ENCODE measurements at regions of chr14 and their contacts with region 1.

Region 1: DNA sequence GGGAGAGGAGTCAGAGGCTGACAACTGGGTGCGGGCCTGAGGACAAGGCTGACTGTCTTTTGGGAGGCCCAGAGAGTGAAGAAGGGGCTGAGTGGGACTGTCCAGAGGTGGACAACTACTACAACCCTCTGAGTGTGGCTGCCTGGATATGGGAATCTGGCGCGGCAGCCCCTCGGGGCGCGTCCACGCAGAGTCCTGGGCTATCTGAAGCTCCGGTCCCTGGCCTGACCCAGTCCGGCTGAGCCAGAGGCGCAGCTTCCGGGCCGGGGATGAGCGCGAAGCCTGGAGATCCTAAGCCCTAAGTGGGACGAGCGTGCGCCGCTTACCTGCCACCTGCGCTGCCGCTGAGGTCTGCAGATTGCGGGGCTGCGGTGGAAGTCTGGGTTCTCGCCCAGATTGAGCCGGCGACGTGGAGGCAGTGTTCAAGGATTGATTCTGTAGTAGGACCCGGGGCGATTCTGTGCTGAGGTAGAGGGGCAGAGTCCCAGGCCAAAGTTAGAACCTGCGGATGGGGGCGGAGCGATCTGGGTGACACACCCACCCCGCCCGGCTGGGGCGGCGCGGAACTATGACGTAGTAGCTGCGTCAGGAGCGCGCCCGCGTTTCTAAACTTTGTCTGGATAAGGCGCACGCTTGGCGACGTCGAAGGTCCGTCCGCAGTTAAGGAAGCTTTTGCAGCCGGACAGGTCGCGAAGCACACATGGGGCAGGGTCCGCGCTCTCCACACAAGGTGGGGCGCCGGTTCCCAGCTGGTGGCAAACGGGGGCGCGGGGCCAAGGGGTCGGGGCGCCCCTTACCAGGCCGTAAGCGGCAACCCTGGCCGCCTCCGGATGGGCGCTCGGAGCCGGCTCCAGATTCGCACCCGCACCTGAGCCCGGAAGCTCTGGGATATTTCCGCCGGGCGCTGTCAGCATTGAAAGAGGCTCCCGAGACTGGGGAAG is at the starts of genes DHRS1 and NOP9:
- DNase-seq: peak; percentile 70 to 96 (median 89)
- ATAC-seq: peak; percentile 86 to 92 (median 90)
- H3K4me3 ChIP-seq: peak within 1 kb of the TSS; percentile 70 to 82
- H3K4me3 Mint-ChIP-seq: peak within 1 kb of the TSS; percentile 92 to 95 (median 93)
- H3K27ac ChIP-seq: peak within 1 kb of the TSS; percentile 84
- H3K27ac Mint-ChIP-seq: peak within 1 kb of the TSS; percentile 95 to 97
- H3K4me1 ChIP-seq: peaks cover 23 to 32% of the 10 kb centered on the region in 2 experiments
- H3K4me1 Mint-ChIP-seq: peaks cover 45 to 60% (median 49%) of the 10 kb centered on the region in 3 donors
- H3K27me3 ChIP-seq: no peaks in the 10 kb centered on the region
- H3K27me3 Mint-ChIP-seq: no peaks in the 10 kb centered on the region
- total RNA-seq, gene DHRS1: 34.2 to 47.6 (median 39.1) TPM
- total RNA-seq, gene NOP9: 29.7 to 33.2 (median 30.8) TPM

Region 2: GRCh38 chr14:24271134-24271833 is 28.2 kb before region 1 on chr14 and contains the start of gene RABGGTA:
- CTCF ChIA-PET with region 1: interaction called, 3 to 11 read pairs
- POLR2A ChIA-PET with region 1: interaction called in 1 of 2 experiments, 3 read pairs
- DNase-seq: peak; percentile 85 to 98 (median 96)
- ATAC-seq: peak; percentile 87 to 97 (median 95)
- H3K4me3 ChIP-seq: peak within 1 kb of the TSS; percentile 82 to 94
- H3K4me3 Mint-ChIP-seq: peak within 1 kb of the TSS; percentile 84 to 90 (median 90)
- H3K27ac ChIP-seq: peak within 1 kb of the TSS; percentile 96
- H3K27ac Mint-ChIP-seq: peak within 1 kb of the TSS; percentile 95 to 97
- H3K4me1 ChIP-seq: peaks cover 15 to 29% of the 10 kb centered on the region in 2 experiments
- H3K4me1 Mint-ChIP-seq: peaks cover 34 to 51% (median 37%) of the 10 kb centered on the region in 3 donors
- H3K27me3 ChIP-seq: no peaks in the 10 kb centered on the region
- H3K27me3 Mint-ChIP-seq: no peaks in the 10 kb centered on the region
- total RNA-seq, gene RABGGTA: 49.3 to 66.5 (median 62.4) TPM

Region 3: DNA sequence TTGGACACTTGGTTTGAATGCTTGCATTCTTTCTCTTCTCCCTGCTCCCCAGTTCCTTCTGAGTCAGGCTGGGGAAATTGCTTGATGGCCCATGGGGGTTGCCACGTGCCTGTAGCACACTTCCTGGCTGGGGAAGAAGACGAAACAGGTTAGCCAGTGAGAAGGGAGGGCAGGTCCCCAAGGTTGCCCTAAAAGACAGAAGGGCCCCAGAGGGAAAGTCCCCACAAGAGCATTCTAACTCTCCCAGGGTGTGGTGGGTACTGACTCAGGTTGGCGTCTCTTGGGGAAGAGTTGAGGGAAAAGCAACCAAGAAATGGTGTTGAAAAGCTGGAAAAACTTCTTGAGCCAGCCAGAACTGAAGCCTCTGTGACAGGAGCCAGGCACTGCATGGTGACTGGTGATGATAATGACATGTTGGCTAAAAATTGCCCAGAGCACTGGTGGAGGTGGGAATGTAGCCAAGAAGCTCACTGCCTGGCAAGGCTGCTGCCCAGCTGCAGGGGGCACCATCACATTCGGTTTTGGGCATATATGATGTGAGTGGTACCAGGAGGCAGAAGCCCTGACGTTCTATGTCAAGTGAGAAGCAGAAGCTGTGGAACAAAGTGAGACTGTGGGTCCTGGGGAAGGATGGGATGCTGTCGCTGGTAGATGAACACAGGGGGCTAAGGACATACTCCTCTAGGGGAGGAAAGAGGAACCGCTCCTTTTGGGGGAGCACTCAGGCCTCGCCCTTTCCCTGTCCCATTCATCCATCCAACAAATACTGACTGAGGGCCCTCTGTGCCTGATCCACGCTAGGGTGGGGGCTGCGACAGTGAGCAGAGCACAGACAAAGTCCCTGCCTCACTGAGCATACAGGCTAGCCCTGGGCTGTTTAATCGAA is 20.0 kb before region 1 on chr14:
- CTCF ChIA-PET with region 1: interaction called in 1 of 2 experiments, 14 read pairs
- POLR2A ChIA-PET with region 1: no interaction called
- DNase-seq: peak in 33 of 35 experiments; percentile 11 to 76 (median 42)
- ATAC-seq: peak; percentile 68 to 94 (median 80)
- H3K4me3 ChIP-seq: no peak overlapping the region
- H3K4me3 Mint-ChIP-seq: peak overlapping the region in 1 of 3 donors; percentile 25
- H3K27ac ChIP-seq: peak overlapping the region; percentile 64
- H3K27ac Mint-ChIP-seq: peak overlapping the region; percentile 48 to 79
- H3K4me1 ChIP-seq: peaks cover 11 to 18% of the 10 kb centered on the region in 2 experiments
- H3K4me1 Mint-ChIP-seq: peaks cover 17 to 47% (median 33%) of the 10 kb centered on the region in 3 donors
- H3K27me3 ChIP-seq: no peaks in the 10 kb centered on the region
- H3K27me3 Mint-ChIP-seq: no peaks in the 10 kb centered on the region

Region 4: DNA sequence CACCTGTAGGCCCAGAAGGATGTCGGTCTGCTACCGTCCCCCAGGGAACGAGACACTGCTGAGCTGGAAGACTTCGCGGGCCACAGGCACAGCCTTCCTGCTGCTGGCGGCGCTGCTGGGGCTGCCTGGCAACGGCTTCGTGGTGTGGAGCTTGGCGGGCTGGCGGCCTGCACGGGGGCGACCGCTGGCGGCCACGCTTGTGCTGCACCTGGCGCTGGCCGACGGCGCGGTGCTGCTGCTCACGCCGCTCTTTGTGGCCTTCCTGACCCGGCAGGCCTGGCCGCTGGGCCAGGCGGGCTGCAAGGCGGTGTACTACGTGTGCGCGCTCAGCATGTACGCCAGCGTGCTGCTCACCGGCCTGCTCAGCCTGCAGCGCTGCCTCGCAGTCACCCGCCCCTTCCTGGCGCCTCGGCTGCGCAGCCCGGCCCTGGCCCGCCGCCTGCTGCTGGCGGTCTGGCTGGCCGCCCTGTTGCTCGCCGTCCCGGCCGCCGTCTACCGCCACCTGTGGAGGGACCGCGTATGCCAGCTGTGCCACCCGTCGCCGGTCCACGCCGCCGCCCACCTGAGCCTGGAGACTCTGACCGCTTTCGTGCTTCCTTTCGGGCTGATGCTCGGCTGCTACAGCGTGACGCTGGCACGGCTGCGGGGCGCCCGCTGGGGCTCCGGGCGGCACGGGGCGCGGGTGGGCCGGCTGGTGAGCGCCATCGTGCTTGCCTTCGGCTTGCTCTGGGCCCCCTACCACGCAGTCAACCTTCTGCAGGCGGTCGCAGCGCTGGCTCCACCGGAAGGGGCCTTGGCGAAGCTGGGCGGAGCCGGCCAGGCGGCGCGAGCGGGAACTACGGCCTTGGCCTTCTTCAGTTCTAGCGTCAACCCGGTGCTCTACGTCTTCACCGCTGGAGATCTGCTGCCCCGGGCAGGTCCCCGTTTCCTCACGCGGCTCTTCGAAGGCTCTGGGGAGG is 11.4 kb after region 1 on chr14 and contains the start of gene LTB4R:
- CTCF ChIA-PET with region 1: interaction called, 5 to 18 read pairs
- POLR2A ChIA-PET with region 1: interaction called in 1 of 2 experiments, 4 read pairs
- DNase-seq: peak; percentile 31 to 84 (median 59)
- ATAC-seq: peak; percentile 86 to 91 (median 88)
- H3K4me3 ChIP-seq: peak within 1 kb of the TSS; percentile 61 to 64
- H3K4me3 Mint-ChIP-seq: peak within 1 kb of the TSS; percentile 74 to 83 (median 77)
- H3K27ac ChIP-seq: peak within 1 kb of the TSS; percentile 77
- H3K27ac Mint-ChIP-seq: peak within 1 kb of the TSS; percentile 94
- H3K4me1 ChIP-seq: peaks cover 39 to 78% of the 10 kb centered on the region in 2 experiments
- H3K4me1 Mint-ChIP-seq: peaks cover 72 to 78% (median 77%) of the 10 kb centered on the region in 3 donors
- H3K27me3 ChIP-seq: no peaks in the 10 kb centered on the region
- H3K27me3 Mint-ChIP-seq: no peaks in the 10 kb centered on the region
- total RNA-seq, gene LTB4R: 17.0 to 29.0 (median 18.0) TPM

Region 5: DNA sequence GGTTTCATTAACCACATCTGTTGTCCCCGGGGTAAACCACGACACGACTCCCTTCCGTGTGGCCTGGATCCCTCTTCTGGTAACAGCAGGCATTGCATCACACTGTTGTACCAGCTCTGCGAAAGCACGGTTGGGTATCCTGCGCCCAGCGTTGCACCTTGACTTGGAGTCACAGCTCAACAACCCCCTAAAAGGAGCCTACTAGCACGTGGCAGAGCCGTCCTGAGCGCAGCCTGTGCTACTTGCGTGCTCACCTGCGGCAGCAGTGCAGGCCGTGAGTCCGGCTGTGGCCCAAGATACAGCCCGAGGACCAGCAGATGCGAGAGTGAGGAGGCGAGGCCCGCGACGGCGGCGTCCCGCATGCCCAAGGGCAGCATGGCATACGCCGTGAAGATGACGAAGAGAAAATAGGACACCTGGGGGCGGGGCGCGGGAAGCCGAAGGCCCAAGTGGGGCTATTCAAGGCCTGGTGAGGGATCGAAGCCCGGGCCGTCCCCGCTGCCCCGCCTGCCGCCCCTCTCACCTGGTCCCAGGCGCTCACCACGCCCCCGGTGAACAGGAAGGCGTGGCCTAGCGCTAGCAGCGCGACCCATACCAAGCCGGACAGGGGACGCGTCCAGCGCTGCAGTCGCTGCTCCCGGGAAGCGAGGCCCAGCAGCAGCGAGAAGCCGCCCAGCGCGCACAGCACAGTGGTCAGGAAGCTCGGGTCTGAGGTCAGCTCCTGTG is 32.9 kb after region 1 on chr14:
- CTCF ChIA-PET with region 1: interaction called, 5 to 10 read pairs
- POLR2A ChIA-PET with region 1: no interaction called
- DNase-seq: peak; percentile 69 to 95 (median 86)
- ATAC-seq: peak; percentile 81 to 88 (median 87)
- H3K4me3 ChIP-seq: peak overlapping the region; percentile 35 to 38
- H3K4me3 Mint-ChIP-seq: peak overlapping the region; percentile 77 to 84 (median 78)
- H3K27ac ChIP-seq: no peak overlapping the region
- H3K27ac Mint-ChIP-seq: peak overlapping the region; percentile 54 to 75
- H3K4me1 ChIP-seq: peaks cover 17 to 79% of the 10 kb centered on the region in 2 experiments
- H3K4me1 Mint-ChIP-seq: peaks cover 53 to 81% (median 56%) of the 10 kb centered on the region in 3 donors
- H3K27me3 ChIP-seq: peaks cover 8 to 46% of the 10 kb centered on the region in 2 experiments
- H3K27me3 Mint-ChIP-seq: peaks cover 18 to 29% of the 10 kb centered on the region in 2 donors

Region 6: DNA sequence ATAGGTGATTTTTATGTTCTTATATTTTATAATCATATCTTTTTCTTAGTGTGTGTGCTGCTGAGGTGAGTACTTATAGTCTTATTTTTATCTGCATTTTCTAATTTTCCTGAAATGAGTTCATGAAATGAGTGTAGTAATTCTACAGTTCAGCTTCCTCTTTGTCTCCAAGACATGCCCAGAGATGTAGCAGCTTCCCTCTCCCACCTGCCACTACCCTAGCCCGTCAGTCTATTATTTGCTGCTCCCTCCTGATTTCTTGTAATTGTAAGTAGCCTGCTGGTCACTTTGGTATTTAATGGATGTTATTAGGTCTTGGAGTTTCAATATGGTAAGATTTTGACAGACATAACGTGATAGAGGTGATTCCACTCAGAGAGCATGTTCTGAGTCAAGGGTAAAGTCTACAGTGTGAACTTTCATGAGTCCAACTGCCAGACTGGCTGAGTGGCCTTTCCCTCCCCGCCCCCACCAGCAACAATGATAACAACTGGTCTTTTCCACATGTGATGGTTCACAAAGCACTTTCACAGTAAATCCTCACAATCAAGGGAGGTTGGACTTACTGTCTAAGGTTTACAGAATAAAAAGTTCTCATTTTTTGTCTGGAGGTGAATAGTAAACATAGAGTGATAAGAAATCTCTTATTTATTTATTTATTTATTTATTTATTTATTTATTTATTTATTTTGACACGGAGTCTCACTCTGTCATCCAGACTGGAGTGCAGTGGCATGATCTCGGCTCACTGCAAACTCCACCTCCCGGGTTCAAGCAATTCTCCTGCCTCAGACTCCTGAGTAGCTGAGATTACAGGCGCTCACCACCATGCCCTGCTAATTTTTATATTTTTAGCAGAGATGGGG is 44.5 kb after region 1 on chr14:
- CTCF ChIA-PET with region 1: no interaction called
- POLR2A ChIA-PET with region 1: no interaction called
- DNase-seq: no peak
- ATAC-seq: no peak
- H3K4me3 ChIP-seq: no peak overlapping the region
- H3K4me3 Mint-ChIP-seq: no peak overlapping the region
- H3K27ac ChIP-seq: no peak overlapping the region
- H3K27ac Mint-ChIP-seq: no peak overlapping the region
- H3K4me1 ChIP-seq: peaks cover 5 to 8% of the 10 kb centered on the region in 2 experiments
- H3K4me1 Mint-ChIP-seq: peaks cover 9 to 12% (median 10%) of the 10 kb centered on the region in 3 donors
- H3K27me3 ChIP-seq: peaks cover 0 to 25% of the 10 kb centered on the region in 2 experiments
- H3K27me3 Mint-ChIP-seq: peaks cover 29 to 32% of the 10 kb centered on the region in 2 donors